Activated CD8-positive, alpha-beta T cell treated with anti-CD3 and anti-CD28 coated beads, Interleukin-2, amount 10 ng/mL, durations not matched to agents 7 days and 5 days (primary cell): ENCODE measurements at regions of chr6 and their contacts with region 1.

Region 1: DNA sequence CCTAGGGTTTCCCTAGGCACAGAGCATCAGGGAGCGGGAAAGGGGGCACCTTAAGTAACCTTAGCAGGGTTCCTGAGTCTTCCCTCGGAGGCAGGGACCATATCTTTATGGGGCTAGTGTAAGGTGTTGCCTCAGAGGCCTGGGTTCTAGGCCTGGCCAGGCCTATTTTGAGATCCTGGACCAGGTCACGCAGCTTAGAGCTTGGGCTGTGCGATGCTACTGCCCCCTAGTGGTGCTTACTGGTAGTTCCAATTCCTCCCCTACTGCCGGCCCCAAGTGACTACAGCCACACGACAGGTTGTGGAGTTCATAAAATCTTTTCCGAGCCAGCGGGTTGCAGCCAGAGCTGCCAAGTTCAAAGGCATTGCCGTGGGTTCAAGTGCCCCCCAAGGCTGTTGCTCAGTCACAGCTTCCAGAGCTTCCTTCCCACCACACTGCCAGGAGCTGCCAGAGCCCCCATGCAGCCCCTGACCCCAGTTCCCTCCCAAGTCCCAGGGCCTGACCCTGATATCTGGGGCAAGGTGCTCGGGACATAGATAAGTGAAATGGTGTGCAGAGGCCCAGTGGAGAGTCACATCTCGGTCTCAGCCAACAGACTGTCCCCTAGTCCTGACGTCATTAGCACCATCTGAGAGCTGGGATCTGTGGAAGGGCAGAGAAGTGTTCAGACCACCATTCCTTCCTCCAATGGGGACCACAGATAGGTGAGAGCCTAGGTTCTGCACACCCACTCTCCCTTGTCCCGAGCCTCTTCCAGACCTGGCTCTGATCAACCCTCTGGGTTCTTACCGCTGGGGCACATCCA is 3.3 kb downstream of the LRRC73 start:
- DNase-seq: peak; percentile 89
- ATAC-seq: peak; percentile 67
- H3K4me3 Mint-ChIP-seq: no peak overlapping the region
- H3K27ac Mint-ChIP-seq: no peak overlapping the region
- H3K4me1 Mint-ChIP-seq: peaks cover 13% of the 10 kb centered on the region
- H3K27me3 Mint-ChIP-seq: peaks cover 15% of the 10 kb centered on the region

Region 2: GRCh38 chr6:43308101-43308989 is 198.5 kb before region 1 on chr6 and contains the start of gene CRIP3:
- CTCF ChIA-PET with region 1: interaction called, 13 read pairs
- POLR2A ChIA-PET with region 1: no interaction called
- DNase-seq: peak; percentile 53
- ATAC-seq: peak; percentile 89
- H3K4me3 Mint-ChIP-seq: peak within 1 kb of the TSS; percentile 63
- H3K27ac Mint-ChIP-seq: no peak within 1 kb of the TSS
- H3K4me1 Mint-ChIP-seq: peaks cover 12% of the 10 kb centered on the region
- H3K27me3 Mint-ChIP-seq: peaks cover 14% of the 10 kb centered on the region
- total RNA-seq, gene CRIP3: not detected

Region 3: DNA sequence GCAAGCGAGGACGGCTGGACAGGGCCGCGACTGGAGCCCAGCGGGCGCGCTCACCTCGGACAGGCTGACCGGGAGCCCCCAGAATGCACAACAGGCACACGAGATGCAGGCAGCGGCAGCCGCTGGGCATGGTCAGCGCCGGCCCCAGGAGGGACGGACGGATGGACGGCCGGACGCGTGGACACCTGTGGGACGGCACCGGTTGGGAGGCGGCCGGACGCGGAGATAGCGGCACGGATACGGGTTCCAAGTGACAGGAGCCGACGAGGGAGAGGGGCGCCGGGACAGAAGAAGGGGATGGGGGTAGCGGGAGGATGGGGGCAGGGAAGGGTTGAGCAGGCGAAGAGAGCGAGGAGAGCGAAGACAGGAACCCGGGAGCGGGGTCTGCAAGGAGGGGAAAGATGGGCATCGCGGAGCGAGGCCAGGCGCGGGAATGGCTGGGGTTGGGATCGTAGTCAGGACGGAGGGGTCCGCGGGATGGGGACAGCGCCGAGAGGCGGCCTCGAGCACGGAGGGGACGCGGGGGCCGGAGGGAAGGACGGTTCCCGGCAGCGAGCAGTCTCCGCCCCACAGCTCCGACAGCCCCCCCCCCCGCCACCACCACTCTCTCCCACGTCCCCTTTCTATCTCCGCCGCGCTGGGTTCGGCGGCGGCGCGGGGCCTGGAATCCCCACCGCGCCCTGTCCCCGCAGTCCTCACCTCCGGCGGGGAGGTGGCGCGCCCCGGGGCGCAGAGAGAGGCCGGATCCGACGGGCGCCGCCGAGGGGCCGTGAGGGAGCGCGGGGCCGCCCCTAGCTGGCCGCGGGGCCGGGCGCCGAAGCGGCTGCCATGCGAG is 52.0 kb before region 1 on chr6:
- CTCF ChIA-PET with region 1: interaction called, 14 read pairs
- POLR2A ChIA-PET with region 1: interaction called, 3 read pairs
- DNase-seq: no peak
- ATAC-seq: peak; percentile 67
- H3K4me3 Mint-ChIP-seq: peak overlapping the region; percentile 67
- H3K27ac Mint-ChIP-seq: no peak overlapping the region
- H3K4me1 Mint-ChIP-seq: peaks cover 18% of the 10 kb centered on the region
- H3K27me3 Mint-ChIP-seq: peaks cover 25% of the 10 kb centered on the region

Region 4: GRCh38 chr6:43496370-43497128 is 10.3 kb before region 1 on chr6:
- CTCF ChIA-PET with region 1: interaction called, 65 read pairs
- POLR2A ChIA-PET with region 1: no interaction called
- DNase-seq: no peak
- ATAC-seq: no peak
- H3K4me3 Mint-ChIP-seq: no peak overlapping the region
- H3K27ac Mint-ChIP-seq: no peak overlapping the region
- H3K4me1 Mint-ChIP-seq: peaks cover 20% of the 10 kb centered on the region
- H3K27me3 Mint-ChIP-seq: no peaks in the 10 kb centered on the region